Right ventricle myocardium inferior (tissue), 1 donor: ENCODE measurements at regions of chr6 and their contacts with region 1.

Region 1: GRCh38 chr6:43174263-43175112 is 3.4 kb downstream of the SRF start:
- DNase-seq: peak; percentile 96
- ATAC-seq: peak; percentile 83

Region 2: GRCh38 chr6:43059168-43060033 is 115.1 kb before region 1 on chr6 and contains the starts of genes KLC4 and MRPL2:
- intact Hi-C with region 1: loop called (anchors 1 kb)
- DNase-seq: peak; percentile 98
- ATAC-seq: peak; percentile 98
- total RNA-seq, gene KLC4: 30.0 TPM
- total RNA-seq, gene MRPL2: 99.7 TPM

Region 3: DNA sequence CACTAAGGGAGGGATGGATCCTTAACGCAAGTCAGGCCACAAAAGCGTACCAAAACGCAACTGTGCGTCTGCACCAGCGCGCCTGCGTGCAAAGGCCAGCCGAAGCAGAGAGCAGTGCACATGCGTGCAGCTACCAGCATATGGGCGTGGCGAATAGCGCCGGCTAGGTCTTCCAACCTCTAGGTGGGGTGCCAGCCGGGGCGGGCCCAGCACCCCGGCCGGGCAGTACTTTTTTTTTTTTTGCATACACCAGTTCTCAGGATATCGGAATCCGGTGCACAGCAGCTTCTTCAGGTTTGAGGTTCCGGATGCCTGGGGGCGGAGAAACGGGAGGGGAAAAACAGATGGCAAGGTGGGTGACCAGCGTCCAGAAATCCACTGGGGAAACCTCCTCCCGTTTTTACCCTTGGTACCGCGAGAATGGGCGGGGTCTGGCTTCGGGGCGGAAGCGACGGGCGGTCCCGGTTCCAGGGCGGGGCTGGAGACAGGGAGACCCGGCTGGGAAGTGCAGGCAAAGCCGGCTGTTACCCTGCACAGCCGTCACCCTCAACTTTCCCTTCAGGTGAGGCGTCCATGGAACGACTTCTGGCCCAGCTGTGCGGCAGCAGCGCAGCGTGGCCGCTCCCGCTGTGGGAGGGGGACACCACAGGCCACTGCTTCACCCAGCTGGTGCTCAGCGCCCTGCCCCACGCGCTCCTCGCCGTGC is 253.1 kb after region 1 on chr6 and contains the start of gene ABCC10:
- intact Hi-C with region 1: loop called (anchors 5 kb)
- DNase-seq: peak; percentile 98
- ATAC-seq: peak; percentile 99
- total RNA-seq, gene ABCC10: 14.8 TPM

Region 4: DNA sequence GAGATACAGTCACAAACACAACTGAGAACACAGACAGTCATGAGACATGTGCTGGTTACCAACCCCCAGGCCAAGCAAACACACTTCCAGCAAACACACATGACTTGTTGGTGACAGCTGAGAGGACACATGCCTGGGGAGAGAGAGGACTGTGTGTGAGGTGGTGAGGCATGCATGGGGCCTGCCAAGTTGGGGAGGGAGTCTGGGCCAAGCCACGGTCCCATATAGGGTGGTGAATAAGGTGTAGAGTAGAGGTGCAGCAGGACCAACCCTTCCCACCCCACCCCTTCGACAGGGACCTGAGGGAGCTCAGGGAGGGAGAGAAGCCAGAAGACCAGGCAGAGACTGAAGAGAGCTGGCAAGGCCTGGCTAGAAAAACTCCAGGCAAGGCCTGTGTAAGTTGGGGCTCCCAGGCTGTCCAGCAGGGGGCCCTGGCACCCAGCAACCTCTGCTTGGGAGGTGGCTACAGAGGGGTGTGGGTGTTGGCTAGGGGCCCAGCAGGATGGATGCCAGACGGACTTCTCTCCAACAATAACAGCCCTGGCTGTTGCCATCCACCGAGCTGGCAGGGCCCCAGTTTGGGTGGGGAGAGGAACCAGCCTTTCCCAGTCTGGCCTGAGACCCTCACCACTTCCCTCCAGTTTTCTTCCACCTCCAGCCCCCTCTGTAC is 1046.9 kb after region 1 on chr6:
- intact Hi-C with region 1: no loop called
- DNase-seq: peak; percentile 92
- ATAC-seq: peak; percentile 62